Naive thymus-derived CD4-positive, alpha-beta T cell (primary cell): ENCODE measurements at regions of chr3 and their contacts with region 1.

Region 1: DNA sequence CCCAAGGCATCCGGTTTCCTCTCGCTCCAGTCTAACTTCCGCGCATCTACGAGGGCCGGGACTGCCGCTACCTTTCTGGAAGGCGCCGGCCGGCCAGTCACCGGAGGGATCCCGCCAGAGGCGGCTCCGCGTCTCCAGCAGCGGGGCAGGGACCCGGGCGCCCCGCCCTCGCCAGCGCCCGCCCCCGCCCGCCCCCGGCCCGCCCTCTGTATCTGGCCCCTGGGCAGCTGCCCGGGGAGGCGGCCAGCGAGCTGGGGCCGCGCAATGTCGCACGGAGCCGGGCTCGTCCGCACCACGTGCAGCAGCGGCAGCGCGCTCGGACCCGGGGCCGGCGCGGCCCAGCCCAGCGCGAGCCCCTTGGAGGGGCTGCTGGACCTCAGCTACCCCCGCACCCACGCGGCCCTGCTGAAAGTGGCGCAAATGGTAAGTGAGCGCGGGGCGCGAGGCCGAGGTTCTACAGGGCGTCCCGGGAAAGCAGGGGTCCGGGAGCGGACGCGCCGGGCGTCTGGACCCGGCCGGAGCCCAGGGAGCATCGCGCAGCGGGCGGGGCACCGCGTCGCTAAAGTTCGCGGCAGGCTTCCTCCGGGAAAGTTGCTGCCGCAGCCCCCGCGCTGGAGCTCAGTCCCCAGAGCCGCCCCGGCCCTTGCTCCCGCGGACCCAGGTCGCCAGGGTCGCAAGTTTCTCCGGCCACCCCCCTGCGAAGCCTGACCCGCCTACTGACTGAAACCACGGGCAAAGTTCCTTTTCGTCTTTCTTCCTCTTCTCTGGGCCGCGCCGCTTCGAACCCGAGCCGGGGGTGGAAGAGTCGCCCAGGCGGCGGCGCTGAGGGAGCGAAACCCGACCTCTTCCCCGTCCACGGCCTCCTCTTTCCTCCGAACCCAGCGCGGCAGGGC is at the start of gene CMTM7:
- DNase-seq: peak; percentile 33 to 68 (median 62)
- ATAC-seq: peak; percentile 75
- H3K4me3 ChIP-seq: peak within 1 kb of the TSS; percentile 81
- H3K4me3 Mint-ChIP-seq: peak within 1 kb of the TSS; percentile 84 to 99 (median 98)
- H3K27ac ChIP-seq: peak within 1 kb of the TSS; percentile 83
- H3K27ac Mint-ChIP-seq: peak within 1 kb of the TSS; percentile 93 to 100 (median 98)
- H3K4me1 ChIP-seq: peaks cover 17 to 25% of the 10 kb centered on the region in 2 donors
- H3K4me1 Mint-ChIP-seq: peaks cover 30 to 70% (median 55%) of the 10 kb centered on the region in 7 donors
- H3K27me3 ChIP-seq: no peaks in the 10 kb centered on the region
- H3K27me3 Mint-ChIP-seq: no peaks in the 10 kb centered on the region
- total RNA-seq, gene CMTM7: 38.6 to 60.1 (median 49.5) TPM

Region 2: GRCh38 chr3:32420126-32421038 is 28.5 kb after region 1 on chr3:
- CTCF ChIA-PET with region 1: interaction called, 3 read pairs
- POLR2A ChIA-PET with region 1: interaction called, 16 read pairs
- intact Hi-C with region 1: no loop called
- DNase-seq: peak in 1 of 9 donors; percentile 37
- ATAC-seq: peak; percentile 39
- H3K4me3 ChIP-seq: no peak overlapping the region
- H3K4me3 Mint-ChIP-seq: peak overlapping the region; percentile 58 to 84 (median 76)
- H3K27ac ChIP-seq: peak overlapping the region; percentile 68
- H3K27ac Mint-ChIP-seq: peak overlapping the region; percentile 76 to 99 (median 94)
- H3K4me1 ChIP-seq: peaks cover 30 to 91% of the 10 kb centered on the region in 2 donors
- H3K4me1 Mint-ChIP-seq: peaks cover 69 to 100% (median 97%) of the 10 kb centered on the region in 7 donors
- H3K27me3 ChIP-seq: no peaks in the 10 kb centered on the region
- H3K27me3 Mint-ChIP-seq: no peaks in the 10 kb centered on the region

Region 3: GRCh38 chr3:32428092-32429068 is 36.5 kb after region 1 on chr3:
- CTCF ChIA-PET with region 1: interaction called, 3 read pairs
- POLR2A ChIA-PET with region 1: interaction called, 16 read pairs
- intact Hi-C with region 1: loop called (anchors 1 to 5 kb)
- DNase-seq: peak in 7 of 9 donors; percentile 45 to 58 (median 56)
- ATAC-seq: peak; percentile 73
- H3K4me3 ChIP-seq: peak overlapping the region; percentile 30
- H3K4me3 Mint-ChIP-seq: peak overlapping the region; percentile 60 to 85 (median 81)
- H3K27ac ChIP-seq: peak overlapping the region; percentile 76
- H3K27ac Mint-ChIP-seq: peak overlapping the region; percentile 81 to 100 (median 98)
- H3K4me1 ChIP-seq: peaks cover 83% of the 10 kb centered on the region in 2 donors
- H3K4me1 Mint-ChIP-seq: peaks cover 64 to 100% (median 90%) of the 10 kb centered on the region in 7 donors
- H3K27me3 ChIP-seq: no peaks in the 10 kb centered on the region
- H3K27me3 Mint-ChIP-seq: no peaks in the 10 kb centered on the region

Region 4: DNA sequence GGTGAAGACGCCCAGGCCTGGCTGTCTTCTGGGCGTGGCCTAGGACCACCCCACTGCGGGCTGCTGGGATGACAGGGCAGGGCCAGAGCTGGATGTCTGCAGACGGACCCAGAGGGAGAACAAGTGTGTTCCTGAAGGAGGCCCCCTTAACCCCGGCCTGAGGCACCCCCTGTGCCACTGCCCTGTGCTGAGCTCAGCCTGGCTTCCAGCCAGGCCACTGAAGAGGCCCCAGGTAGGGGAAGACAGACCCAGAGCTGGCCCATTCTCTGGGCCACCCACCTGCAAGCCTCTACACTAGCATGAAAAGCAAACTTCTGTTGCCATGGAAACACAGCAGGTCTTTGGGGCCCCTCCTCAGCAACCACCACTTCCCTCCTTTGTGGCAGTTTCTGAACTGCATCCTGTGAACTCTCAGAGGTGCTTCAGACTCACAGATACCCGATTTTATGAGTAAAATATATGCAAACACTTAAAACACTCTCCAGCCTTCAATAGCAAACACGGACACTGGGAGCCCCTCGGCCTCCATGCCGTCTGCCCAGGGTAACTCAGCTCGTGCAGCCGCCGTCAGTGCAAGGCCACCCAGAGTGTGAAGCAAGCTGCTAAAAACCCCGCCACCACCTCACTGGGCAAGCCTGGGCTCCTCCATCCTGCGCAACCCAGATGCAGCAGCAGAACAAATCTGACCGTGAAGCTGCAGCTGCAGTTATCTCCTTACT is 68.3 kb after region 1 on chr3:
- CTCF ChIA-PET with region 1: interaction called, 5 read pairs
- POLR2A ChIA-PET with region 1: interaction called, 14 read pairs
- intact Hi-C with region 1: loop called (anchors 1 kb)
- DNase-seq: peak; percentile 52 to 95 (median 94)
- ATAC-seq: peak; percentile 87
- H3K4me3 ChIP-seq: peak overlapping the region; percentile 34
- H3K4me3 Mint-ChIP-seq: peak overlapping the region in 5 of 10 donors; percentile 25 to 92 (median 87)
- H3K27ac ChIP-seq: peak overlapping the region; percentile 97
- H3K27ac Mint-ChIP-seq: no peak overlapping the region
- H3K4me1 ChIP-seq: peaks cover 71 to 77% of the 10 kb centered on the region in 2 donors
- H3K4me1 Mint-ChIP-seq: peaks cover 30 to 45% (median 33%) of the 10 kb centered on the region in 7 donors
- H3K27me3 ChIP-seq: no peaks in the 10 kb centered on the region
- H3K27me3 Mint-ChIP-seq: no peaks in the 10 kb centered on the region

Region 5: DNA sequence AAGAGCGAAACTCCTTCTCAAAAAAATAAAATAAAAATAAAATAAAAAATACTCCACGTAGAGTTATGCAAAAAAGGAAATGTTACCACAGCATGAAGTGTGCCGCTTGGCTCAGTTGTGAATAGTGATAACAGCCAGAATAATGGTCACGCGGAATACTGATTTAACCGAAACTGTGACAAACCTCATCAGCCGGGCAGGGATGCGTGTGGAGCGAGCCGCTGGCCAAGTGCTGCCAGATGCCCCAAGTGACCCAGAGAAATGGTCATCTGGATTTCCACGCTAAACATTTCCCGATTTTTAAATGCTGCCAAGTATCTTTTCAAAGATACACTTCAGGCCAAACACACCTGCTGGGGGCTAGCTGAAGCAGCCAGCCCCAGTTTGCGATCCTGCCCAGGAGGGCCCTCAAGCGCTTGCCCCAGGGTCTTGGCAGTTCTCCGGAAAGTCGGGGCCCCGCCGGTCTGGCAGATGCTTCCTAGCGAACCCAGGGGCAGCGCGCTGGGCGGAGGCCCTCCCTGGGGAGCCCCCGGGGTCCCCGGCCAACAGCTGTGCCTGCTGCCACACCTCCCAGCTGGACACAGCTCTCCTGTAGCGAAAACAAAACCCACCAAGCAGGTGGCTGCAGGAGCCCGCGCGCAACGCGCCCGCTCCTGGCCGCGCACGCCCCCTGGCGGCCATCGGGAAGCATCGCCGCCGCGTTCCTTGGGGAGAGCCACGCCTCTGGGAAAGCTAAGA is 75.6 kb after region 1 on chr3:
- CTCF ChIA-PET with region 1: interaction called, 23 read pairs
- POLR2A ChIA-PET with region 1: interaction called, 10 read pairs
- intact Hi-C with region 1: loop called (anchors 1 kb)
- DNase-seq: peak; percentile 59 to 89 (median 78)
- ATAC-seq: peak; percentile 94
- H3K4me3 ChIP-seq: peak overlapping the region; percentile 66
- H3K4me3 Mint-ChIP-seq: peak overlapping the region; percentile 39 to 81 (median 68)
- H3K27ac ChIP-seq: peak overlapping the region; percentile 81
- H3K27ac Mint-ChIP-seq: peak overlapping the region in 7 of 9 donors; percentile 25 to 93 (median 85)
- H3K4me1 ChIP-seq: peaks cover 14 to 25% of the 10 kb centered on the region in 2 donors
- H3K4me1 Mint-ChIP-seq: peaks cover 19 to 62% (median 49%) of the 10 kb centered on the region in 7 donors
- H3K27me3 ChIP-seq: no peaks in the 10 kb centered on the region
- H3K27me3 Mint-ChIP-seq: no peaks in the 10 kb centered on the region

Region 6: DNA sequence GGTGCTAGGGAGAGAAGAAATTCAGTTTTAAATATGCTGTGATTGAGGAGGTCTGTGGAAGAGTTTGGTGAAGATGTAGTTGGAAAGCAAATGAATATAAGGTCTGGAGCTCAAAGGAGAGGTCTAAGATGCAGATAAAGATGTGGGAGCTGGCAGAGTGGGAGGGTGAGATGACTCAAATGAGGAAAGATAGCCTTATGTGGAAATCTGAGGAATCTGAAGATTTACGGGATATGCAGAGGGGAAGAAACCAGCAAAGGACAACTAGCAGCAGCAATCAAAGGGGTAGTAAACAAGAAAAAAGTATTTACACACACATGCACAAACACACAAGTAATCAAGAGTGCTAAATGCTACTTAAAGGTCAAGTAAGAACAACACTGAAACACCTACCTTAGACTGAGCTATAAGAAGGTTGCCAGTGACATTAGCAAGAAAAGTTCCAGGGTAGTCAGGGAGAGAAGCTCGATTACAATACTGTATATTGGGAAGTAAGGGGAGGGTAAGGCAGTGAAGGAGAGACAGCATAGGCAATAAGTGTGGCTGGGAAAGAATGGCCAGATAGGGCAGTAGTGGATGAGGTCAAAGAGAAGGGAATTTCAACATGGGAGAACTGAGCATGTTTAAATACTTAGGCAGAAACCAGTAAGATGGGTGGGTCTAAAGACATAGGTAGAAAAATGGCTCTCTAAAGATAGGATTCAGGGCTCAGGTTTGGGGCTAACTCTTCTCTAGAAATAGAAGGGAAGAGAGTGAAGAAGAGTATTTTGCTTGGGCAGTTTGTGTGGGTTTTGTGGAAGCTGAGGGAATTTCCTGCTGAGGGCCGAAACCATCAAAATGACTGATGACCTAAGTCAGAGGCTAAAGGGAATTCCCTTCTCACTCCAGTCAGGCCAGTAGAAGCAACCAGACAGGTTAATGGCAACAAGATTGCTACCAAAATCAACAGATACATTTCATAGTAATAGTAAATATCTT is 101.8 kb after region 1 on chr3:
- CTCF ChIA-PET with region 1: no interaction called
- POLR2A ChIA-PET with region 1: interaction called, 10 read pairs
- intact Hi-C with region 1: no loop called
- DNase-seq: no peak
- ATAC-seq: peak; percentile 28
- H3K4me3 ChIP-seq: no peak overlapping the region
- H3K4me3 Mint-ChIP-seq: no peak overlapping the region
- H3K27ac ChIP-seq: no peak overlapping the region
- H3K27ac Mint-ChIP-seq: no peak overlapping the region
- H3K4me1 ChIP-seq: peaks cover 0 to 4% of the 10 kb centered on the region in 2 donors
- H3K4me1 Mint-ChIP-seq: peaks cover 16 to 30% (median 24%) of the 10 kb centered on the region in 7 donors
- H3K27me3 ChIP-seq: no peaks in the 10 kb centered on the region
- H3K27me3 Mint-ChIP-seq: no peaks in the 10 kb centered on the region

Region 7: DNA sequence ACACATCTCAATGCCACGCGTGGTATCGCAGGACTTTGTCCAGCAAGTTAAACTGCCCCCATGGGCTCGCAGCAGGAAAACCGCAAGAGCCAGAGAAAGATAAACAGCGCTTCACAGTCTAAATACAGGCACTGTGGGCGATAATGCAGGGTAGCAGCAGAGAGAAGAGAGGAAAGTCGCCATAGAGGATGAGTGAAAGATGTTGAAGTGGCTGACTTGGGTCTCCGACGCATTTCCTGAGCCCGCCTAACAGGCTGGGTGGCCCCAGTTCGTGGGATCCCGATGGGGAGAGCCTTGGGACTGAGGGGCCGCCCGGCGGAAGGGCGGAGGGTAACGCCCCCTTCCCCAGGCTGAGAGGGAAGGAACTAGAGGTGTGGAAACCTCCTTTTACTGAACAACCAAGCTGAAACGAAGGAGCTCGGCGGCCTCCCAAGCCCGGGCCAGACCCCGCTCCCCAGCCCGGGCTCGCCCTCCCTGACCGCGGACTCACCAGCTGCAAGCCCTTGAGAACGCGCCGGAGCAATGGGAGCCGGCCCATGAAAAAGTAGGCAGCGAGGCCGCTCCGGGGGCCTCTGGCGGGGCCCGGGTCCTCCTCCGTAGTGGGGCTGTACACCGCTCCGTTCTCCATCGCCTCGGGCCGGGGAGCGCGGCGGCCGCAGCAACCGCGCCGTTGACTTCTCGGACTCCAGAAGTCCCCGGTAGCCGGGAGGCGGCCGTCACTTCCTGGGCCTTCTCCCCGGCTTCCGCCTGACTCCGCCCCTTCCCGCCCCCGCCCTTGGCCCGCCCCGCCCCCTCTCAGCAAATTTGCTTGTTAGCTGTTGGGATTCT is 110.4 kb after region 1 on chr3 and contains the start of gene CMTM6:
- CTCF ChIA-PET with region 1: no interaction called
- POLR2A ChIA-PET with region 1: no interaction called
- intact Hi-C with region 1: loop called in 1 of 2 experiments (anchors 1 kb)
- DNase-seq: peak; percentile 49 to 77 (median 70)
- ATAC-seq: peak; percentile 92
- H3K4me3 ChIP-seq: peak within 1 kb of the TSS; percentile 89
- H3K4me3 Mint-ChIP-seq: peak within 1 kb of the TSS; percentile 79 to 97 (median 93)
- H3K27ac ChIP-seq: peak within 1 kb of the TSS; percentile 98
- H3K27ac Mint-ChIP-seq: peak within 1 kb of the TSS; percentile 86 to 98 (median 90)
- H3K4me1 ChIP-seq: peaks cover 6 to 23% of the 10 kb centered on the region in 2 donors
- H3K4me1 Mint-ChIP-seq: peaks cover 28 to 48% (median 43%) of the 10 kb centered on the region in 7 donors
- H3K27me3 ChIP-seq: no peaks in the 10 kb centered on the region
- H3K27me3 Mint-ChIP-seq: peaks cover 0 to 4% (median 0%) of the 10 kb centered on the region in 5 donors
- total RNA-seq, gene CMTM6: 24.1 to 61.1 (median 38.1) TPM

Region 8: DNA sequence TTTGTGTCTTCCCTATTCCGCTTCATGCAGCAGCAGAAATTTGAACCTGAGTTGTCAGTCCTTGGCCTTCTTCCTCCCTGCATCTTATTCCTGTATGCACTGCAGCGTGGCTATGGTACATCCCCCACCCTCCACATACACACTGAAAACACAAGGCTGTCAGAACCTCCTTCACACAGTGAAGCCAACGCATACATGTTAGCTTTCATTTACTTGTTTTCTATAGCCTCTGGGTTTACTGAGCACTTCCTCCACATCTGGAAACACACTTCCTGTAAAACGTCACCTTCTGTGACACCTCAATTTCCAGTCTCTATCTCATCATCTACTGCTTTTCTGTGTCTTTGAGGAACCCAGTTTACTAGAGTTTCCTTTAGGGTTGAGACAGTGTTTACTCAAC is 779.7 kb after region 1 on chr3:
- CTCF ChIA-PET with region 1: no interaction called
- POLR2A ChIA-PET with region 1: no interaction called
- intact Hi-C with region 1: no loop called
- DNase-seq: peak in 1 of 9 donors; percentile 23
- ATAC-seq: no peak
- H3K4me3 ChIP-seq: no peak overlapping the region
- H3K4me3 Mint-ChIP-seq: peak overlapping the region in 1 of 10 donors; percentile 29
- H3K27ac ChIP-seq: no peak overlapping the region
- H3K27ac Mint-ChIP-seq: peak overlapping the region in 2 of 9 donors; percentile 14 to 80
- H3K4me1 ChIP-seq: no peaks in the 10 kb centered on the region
- H3K4me1 Mint-ChIP-seq: peaks cover 0 to 12% (median 9%) of the 10 kb centered on the region in 7 donors
- H3K27me3 ChIP-seq: no peaks in the 10 kb centered on the region
- H3K27me3 Mint-ChIP-seq: peaks cover 0 to 6% (median 0%) of the 10 kb centered on the region in 5 donors